B cell (primary cell): ENCODE measurements at regions of chr17 and their contacts with region 1.

Region 1: DNA sequence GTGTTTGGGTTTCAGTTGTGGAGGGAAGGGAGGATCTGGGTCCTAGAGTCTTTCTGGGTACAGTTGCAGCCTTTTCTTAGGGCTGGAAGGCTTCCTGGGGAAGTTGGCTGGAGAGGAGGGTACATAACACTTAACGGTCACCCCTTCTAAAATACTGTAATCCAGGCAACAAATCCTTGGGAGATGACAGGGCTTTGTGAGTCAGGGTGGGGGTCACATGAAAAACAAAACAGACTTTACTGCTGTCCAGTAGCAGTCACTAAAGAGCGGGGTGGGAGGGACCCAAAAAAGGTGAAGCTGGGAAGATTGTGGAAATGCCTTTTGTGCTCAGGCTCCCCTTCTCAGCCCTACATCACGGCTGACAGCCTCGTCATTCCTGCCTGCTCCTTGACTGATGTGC is 6.3 kb downstream of the SAP30BP start:
- DNase-seq: no peak
- ATAC-seq: no peak
- H3K4me3 ChIP-seq: no peak overlapping the region
- H3K4me3 Mint-ChIP-seq: no peak overlapping the region
- H3K27ac ChIP-seq: no peak overlapping the region
- H3K27ac Mint-ChIP-seq: no peak overlapping the region
- H3K4me1 ChIP-seq: peaks cover 0 to 2% of the 10 kb centered on the region in 2 donors
- H3K4me1 Mint-ChIP-seq: peaks cover 20% of the 10 kb centered on the region
- H3K27me3 ChIP-seq: no peaks in the 10 kb centered on the region
- H3K27me3 Mint-ChIP-seq: no peaks in the 10 kb centered on the region
- CTCF ChIP-seq: no peak

Region 2: GRCh38 chr17:75684924-75685323 is 11.4 kb after region 1 on chr17:
- CTCF ChIA-PET with region 1: interaction called, 19 read pairs
- POLR2A ChIA-PET with region 1: no interaction called
- intact Hi-C with region 1: no loop called
- DNase-seq: no peak
- ATAC-seq: no peak
- H3K4me3 ChIP-seq: no peak overlapping the region
- H3K4me3 Mint-ChIP-seq: no peak overlapping the region
- H3K27ac ChIP-seq: no peak overlapping the region
- H3K27ac Mint-ChIP-seq: no peak overlapping the region
- H3K4me1 ChIP-seq: peaks cover 33 to 46% of the 10 kb centered on the region in 2 donors
- H3K4me1 Mint-ChIP-seq: peaks cover 51% of the 10 kb centered on the region
- H3K27me3 ChIP-seq: no peaks in the 10 kb centered on the region
- H3K27me3 Mint-ChIP-seq: no peaks in the 10 kb centered on the region
- CTCF ChIP-seq: no peak

Region 3: DNA sequence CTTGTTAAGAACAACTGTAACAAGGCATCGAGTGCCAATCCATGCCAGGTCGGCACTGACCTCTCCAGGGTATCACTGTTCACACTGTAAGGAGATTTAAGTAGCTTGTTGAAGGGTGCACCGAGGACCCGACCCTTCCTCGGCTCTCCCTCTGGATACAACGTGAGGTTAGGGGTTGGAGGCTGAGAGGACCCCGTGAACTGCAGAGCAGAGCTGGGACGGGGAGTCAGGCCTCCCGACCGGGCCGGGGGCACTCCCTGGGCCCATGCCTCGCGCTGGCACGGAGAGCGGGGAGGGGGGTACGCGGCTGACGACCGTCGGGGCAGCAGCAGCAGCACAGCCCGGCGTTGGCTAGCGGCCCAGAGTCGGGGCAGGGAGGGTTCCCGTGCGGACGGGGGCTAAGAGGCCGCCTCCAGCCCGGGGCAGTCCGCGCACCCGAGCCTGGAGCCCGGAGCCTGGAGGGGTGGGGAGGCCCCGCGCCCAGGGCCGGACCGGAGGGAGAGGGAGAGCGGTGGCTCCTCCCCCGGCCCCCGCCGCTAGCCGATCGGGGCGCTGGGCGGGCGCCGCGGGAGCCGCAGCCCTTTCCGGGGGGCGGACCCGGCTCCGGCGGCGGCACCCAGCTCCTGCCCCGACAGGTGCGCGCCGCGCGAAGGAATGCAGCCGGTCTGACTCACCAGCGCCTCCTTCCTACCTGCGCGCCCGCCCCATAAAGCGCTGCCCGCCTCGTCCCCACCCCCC is 47.4 kb after region 1 on chr17 and contains the start of gene ITGB4:
- CTCF ChIA-PET with region 1: interaction called, 16 read pairs
- POLR2A ChIA-PET with region 1: no interaction called
- intact Hi-C with region 1: no loop called
- DNase-seq: peak; percentile 73
- ATAC-seq: peak; percentile 93
- H3K4me3 ChIP-seq: peak within 1 kb of the TSS in 4 of 5 experiments; percentile 28 to 60 (median 50)
- H3K4me3 Mint-ChIP-seq: peak within 1 kb of the TSS; percentile 83
- H3K27ac ChIP-seq: no peak within 1 kb of the TSS
- H3K27ac Mint-ChIP-seq: no peak within 1 kb of the TSS
- H3K4me1 ChIP-seq: peaks cover 5 to 11% of the 10 kb centered on the region in 2 donors
- H3K4me1 Mint-ChIP-seq: peaks cover 7% of the 10 kb centered on the region
- H3K27me3 ChIP-seq: peaks cover 0 to 30% (median 4%) of the 10 kb centered on the region in 4 experiments
- H3K27me3 Mint-ChIP-seq: peaks cover 14% of the 10 kb centered on the region
- CTCF ChIP-seq: no peak
- total RNA-seq, gene ITGB4: 0.81 and 1.1 TPM in 2 replicates